H1 (cell line): ENCODE measurements at regions of chr12 and their contacts with region 1.

Region 1: GRCh38 chr12:120086801-120087621 is 29.5 kb downstream of the RAB35 start:
- DNase-seq: peak; percentile 100
- H3K4me3 ChIP-seq: peak overlapping the region; percentile 17 to 57 (median 38); a peak in 7 of 8 replicates
- H3K27ac ChIP-seq: peak overlapping the region; percentile 59
- H3K4me1 ChIP-seq: peaks cover 9 to 21% (median 12%) of the 10 kb centered on the region in 4 experiments
- H3K27me3 ChIP-seq: no peaks in the 10 kb centered on the region
- CTCF ChIP-seq: peak; percentile 90 to 96 (median 92)
- EP300 ChIP-seq: peak in 1 of 2 experiments; percentile 97; a peak in 2 of 3 replicates
- POLR2A ChIP-seq: peak; percentile 52 to 79
- RAD21 ChIP-seq: peak; percentile 62 to 79

Region 2: GRCh38 chr12:120012067-120012621 is 74.9 kb before region 1 on chr12:
- CTCF ChIA-PET with region 1: no interaction called
- POLR2A ChIA-PET with region 1: no interaction called
- DNase-seq: no peak
- H3K4me3 ChIP-seq: no peak overlapping the region
- H3K27ac ChIP-seq: no peak overlapping the region
- H3K4me1 ChIP-seq: peaks cover 0 to 2% (median 0%) of the 10 kb centered on the region in 4 experiments; a peak in 1 of 7 replicates
- H3K27me3 ChIP-seq: no peaks in the 10 kb centered on the region
- CTCF ChIP-seq: no peak
- EP300 ChIP-seq: no peak
- POLR2A ChIP-seq: no peak
- RAD21 ChIP-seq: no peak

Region 3: GRCh38 chr12:120072472-120073249 is 14.3 kb before region 1 on chr12:
- CTCF ChIA-PET with region 1: interaction called, 13 read pairs
- POLR2A ChIA-PET with region 1: interaction called, 5 read pairs
- DNase-seq: no peak
- H3K4me3 ChIP-seq: no peak overlapping the region
- H3K27ac ChIP-seq: no peak overlapping the region
- H3K4me1 ChIP-seq: no peaks in the 10 kb centered on the region
- H3K27me3 ChIP-seq: no peaks in the 10 kb centered on the region
- CTCF ChIP-seq: no peak
- EP300 ChIP-seq: no peak
- POLR2A ChIP-seq: no peak
- RAD21 ChIP-seq: no peak